K562 (cell line): ENCODE measurements at regions of chr15 and their contacts with region 1.

Region 1: DNA sequence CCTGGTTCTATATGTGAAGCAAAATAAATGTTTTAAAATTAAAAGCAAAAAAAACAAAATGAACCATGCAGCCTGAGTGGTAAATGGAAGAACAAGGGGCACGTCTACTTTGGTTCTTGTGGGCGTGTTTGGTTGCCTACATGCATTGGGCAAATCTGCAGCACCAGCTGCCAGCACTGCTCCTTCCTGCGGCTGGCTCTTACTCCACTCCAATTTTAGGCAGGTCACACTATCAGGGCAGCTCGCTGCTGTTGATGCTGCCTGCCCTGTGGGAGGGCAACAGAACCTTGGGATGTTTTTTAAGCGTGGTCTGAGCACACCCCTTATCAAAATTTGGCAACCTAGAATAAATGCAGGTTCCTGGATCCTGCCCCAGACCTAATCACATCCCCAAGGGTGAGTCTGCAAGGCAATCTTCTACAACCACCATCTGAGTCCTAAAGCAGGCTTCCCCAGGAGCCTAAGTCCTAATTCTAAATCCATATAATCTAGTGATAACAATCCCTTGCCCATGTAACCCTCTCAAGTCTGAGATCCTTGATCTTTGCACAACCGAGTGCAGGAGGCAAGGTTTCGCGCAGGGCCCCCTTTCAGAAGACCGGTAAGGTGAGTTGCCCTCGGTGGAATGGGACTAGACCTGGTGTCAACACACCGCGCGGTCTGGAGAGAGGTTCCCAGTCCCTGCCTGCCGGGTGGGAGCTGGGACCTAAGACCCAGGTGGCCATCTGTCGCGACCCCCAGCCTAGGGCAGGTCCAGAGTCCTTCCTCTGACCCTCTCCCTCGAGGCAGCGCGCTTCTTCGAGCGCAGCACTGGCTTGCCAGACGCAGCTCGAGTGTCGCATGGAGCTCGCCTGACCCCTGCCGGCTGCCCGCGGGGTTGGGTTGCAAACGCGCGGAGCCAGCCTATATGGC is 15.9 kb downstream of the IVD start:
- DNase-seq: peak; percentile 84 to 89 (median 86)
- ATAC-seq: peak; percentile 100
- H3K4me3 ChIP-seq: no peak overlapping the region
- H3K27ac ChIP-seq: no peak overlapping the region
- H3K4me1 ChIP-seq: peaks cover 2 to 14% of the 10 kb centered on the region in 2 experiments; a peak in 4 of 5 replicates
- H3K27me3 ChIP-seq: no peaks in the 10 kb centered on the region
- CTCF ChIP-seq: peak; percentile 93 to 97 (median 94)
- EP300 ChIP-seq: no peak
- POLR2A ChIP-seq: no peak
- RAD21 ChIP-seq: peak; percentile 91 to 95

Region 2: DNA sequence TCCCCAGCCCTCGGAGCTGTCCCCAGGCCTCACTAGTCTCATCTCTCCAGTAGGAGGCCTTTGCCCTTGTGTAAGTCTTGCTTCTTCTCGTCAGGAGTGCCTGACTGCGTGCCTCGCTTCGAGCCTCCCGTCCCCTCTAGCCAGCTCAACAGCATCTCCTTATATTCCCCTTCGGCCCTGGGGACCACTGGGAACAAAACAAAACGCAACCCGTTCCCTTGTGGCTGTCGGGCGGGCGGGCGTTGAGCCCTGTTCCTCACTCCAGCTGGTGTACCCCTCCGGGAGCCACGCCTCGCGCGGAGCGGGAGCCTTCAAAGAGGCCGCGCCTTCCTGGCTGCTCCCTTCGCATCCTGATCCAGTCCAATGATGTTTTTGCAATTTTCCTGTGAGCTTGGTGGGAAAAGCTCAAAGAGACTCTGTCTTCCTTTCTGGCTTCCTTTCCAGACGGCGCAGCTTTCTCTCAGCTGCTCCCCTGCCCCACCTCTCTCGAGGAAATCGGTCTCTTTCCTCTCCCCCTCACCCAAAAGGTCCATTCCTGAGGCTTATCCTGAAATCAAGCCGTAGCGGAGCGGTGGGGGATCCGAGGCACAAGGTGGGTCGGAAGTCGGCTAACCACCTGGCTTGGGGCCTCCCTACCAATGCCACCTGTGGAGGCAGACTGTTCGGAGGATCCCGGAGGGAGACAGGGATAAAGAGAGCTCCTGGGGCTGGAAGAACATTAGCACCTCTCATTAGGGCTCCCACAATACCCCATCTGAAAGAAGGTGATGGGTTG is 349.1 kb before region 1 on chr15:
- CTCF ChIA-PET with region 1: no interaction called
- POLR2A ChIA-PET with region 1: no interaction called
- in situ Hi-C with region 1: no loop called
- intact Hi-C with region 1: no loop called
- DNase-seq: no peak
- ATAC-seq: peak; percentile 40; the same call in 2 of the 3 replicates
- H3K4me3 ChIP-seq: no peak overlapping the region
- H3K27ac ChIP-seq: no peak overlapping the region
- H3K4me1 ChIP-seq: peaks cover 9 to 32% of the 10 kb centered on the region in 2 experiments; a peak in 4 of 5 replicates
- H3K27me3 ChIP-seq: no peaks in the 10 kb centered on the region
- CTCF ChIP-seq: no peak
- EP300 ChIP-seq: no peak
- POLR2A ChIP-seq: no peak
- RAD21 ChIP-seq: no peak

Region 3: GRCh38 chr15:40217159-40217824 is 204.2 kb before region 1 on chr15:
- CTCF ChIA-PET with region 1: interaction called, 6 read pairs
- POLR2A ChIA-PET with region 1: no interaction called
- in situ Hi-C with region 1: loop called (anchors 10 kb)
- intact Hi-C with region 1: no loop called
- DNase-seq: peak; percentile 63 to 79 (median 67)
- ATAC-seq: peak; percentile 96
- H3K4me3 ChIP-seq: no peak overlapping the region
- H3K27ac ChIP-seq: no peak overlapping the region
- H3K4me1 ChIP-seq: no peaks in the 10 kb centered on the region
- H3K27me3 ChIP-seq: no peaks in the 10 kb centered on the region
- CTCF ChIP-seq: peak; percentile 80 to 97 (median 93)
- EP300 ChIP-seq: no peak
- POLR2A ChIP-seq: no peak
- RAD21 ChIP-seq: peak; percentile 89 to 90

Region 4: DNA sequence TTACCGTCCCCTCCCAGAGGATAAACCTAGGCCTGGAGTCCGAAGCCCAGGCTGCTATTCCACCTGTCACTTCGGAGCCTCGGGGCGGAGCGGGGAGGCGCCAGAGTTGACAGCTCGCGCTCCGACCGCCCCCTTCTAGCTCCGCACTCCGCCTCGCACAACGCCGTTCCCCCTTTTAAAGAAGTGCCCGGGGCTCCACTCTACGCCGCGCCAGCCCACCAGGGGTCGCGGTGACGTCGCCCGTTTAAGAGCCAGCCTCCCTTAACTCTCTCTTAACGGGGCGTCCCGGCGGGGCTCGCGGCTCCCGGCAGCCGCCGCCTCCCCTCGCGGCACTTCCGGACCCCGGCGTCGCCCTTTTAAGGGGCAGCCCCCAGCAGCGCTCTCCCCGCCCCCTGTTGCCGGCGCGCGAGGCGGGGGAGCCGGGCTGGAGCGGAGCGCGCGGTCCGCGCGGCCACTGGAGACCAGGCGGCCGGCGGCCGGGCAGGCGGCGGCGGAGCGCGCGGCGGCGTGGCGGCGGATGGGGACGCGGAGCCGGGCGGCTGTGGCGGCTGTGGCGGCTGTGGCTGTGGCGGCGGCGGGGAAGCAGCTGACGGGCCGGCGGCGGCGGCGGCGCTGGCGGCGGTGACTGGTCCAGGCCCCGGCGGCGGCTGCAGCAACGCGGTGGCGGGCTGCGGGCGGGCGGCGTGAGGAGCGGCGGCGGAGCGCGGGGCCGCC is 98.1 kb before region 1 on chr15 and contains the start of gene INAFM2:
- CTCF ChIA-PET with region 1: interaction called, 7 read pairs
- POLR2A ChIA-PET with region 1: interaction called, 3 read pairs
- in situ Hi-C with region 1: no loop called
- intact Hi-C with region 1: loop called (anchors 5 kb)
- DNase-seq: peak; percentile 95 to 96 (median 96)
- ATAC-seq: peak; percentile 94
- H3K4me3 ChIP-seq: peak within 1 kb of the TSS; percentile 51
- H3K27ac ChIP-seq: peak within 1 kb of the TSS; percentile 75
- H3K4me1 ChIP-seq: peaks cover 31 to 34% of the 10 kb centered on the region in 2 experiments
- H3K27me3 ChIP-seq: no peaks in the 10 kb centered on the region
- CTCF ChIP-seq: peak; percentile 54 to 64 (median 57)
- EP300 ChIP-seq: no peak; the same call in 1 of the 2 replicates
- POLR2A ChIP-seq: no peak
- RAD21 ChIP-seq: peak; percentile 34 to 47; a peak in 3 of 4 replicates
- polyA plus RNA-seq, gene INAFM2: 11.8 to 12.3 TPM

Region 5: GRCh38 chr15:40357723-40358470 is 63.6 kb before region 1 on chr15 and contains the start of gene DISP2:
- CTCF ChIA-PET with region 1: no interaction called
- POLR2A ChIA-PET with region 1: interaction called, 3 read pairs
- in situ Hi-C with region 1: no loop called
- intact Hi-C with region 1: loop called (anchors 5 kb)
- DNase-seq: peak; percentile 89 to 100 (median 100)
- ATAC-seq: peak; percentile 89
- H3K4me3 ChIP-seq: peak within 1 kb of the TSS; percentile 53
- H3K27ac ChIP-seq: no peak within 1 kb of the TSS
- H3K4me1 ChIP-seq: peaks cover 9 to 26% of the 10 kb centered on the region in 2 experiments; a peak in 4 of 5 replicates
- H3K27me3 ChIP-seq: peaks cover 0 to 9% of the 10 kb centered on the region in 2 experiments; a peak in 1 of 5 replicates
- CTCF ChIP-seq: no peak
- EP300 ChIP-seq: no peak
- POLR2A ChIP-seq: no peak
- RAD21 ChIP-seq: no peak
- polyA plus RNA-seq, gene DISP2: 0.08 TPM in 1 of 2 experiments, not detected in the other

Region 6: DNA sequence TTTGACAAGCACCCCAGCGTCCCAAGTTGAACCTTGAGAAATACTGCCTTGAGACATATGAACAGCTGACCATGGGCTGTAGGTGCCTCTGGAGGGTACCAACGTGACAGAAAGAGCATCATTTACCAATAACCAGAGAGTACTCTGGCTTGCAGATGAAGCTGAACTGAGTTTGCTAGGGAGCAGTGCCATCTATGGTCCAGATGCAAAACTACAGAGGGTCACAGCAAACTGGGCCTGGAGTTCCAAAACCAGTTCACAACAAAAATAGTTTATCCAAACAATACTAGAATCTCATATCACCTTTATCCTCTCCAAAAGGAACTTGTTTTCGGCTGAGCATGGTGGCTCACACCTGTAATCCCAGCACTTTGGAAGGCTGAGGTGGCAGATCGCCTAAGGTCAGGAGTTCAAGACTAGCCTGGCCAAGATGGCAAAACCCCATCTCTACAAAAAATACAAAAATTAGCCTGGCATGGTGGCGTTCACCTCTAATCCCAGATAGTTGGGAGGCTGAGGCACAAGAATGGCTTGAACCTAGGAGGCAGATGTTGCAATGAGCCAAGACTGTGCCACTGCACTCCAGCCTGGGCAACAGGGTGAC is 601.1 kb after region 1 on chr15:
- CTCF ChIA-PET with region 1: no interaction called
- POLR2A ChIA-PET with region 1: no interaction called
- in situ Hi-C with region 1: no loop called
- intact Hi-C with region 1: no loop called
- DNase-seq: peak; percentile 30 to 46 (median 40)
- ATAC-seq: peak; percentile 82
- H3K4me3 ChIP-seq: no peak overlapping the region
- H3K27ac ChIP-seq: no peak overlapping the region
- H3K4me1 ChIP-seq: no peaks in the 10 kb centered on the region
- H3K27me3 ChIP-seq: no peaks in the 10 kb centered on the region
- CTCF ChIP-seq: peak; percentile 65 to 72 (median 66)
- EP300 ChIP-seq: no peak
- POLR2A ChIP-seq: no peak
- RAD21 ChIP-seq: peak; percentile 52 to 63